GM10248 (cell line): ENCODE measurements at regions of chr7 and their contacts with region 1.

Region 1: GRCh38 chr7:117790251-117790650 is 83.0 kb downstream of the CTTNBP2 start:
- DNase-seq: no peak
- CTCF ChIP-seq: no peak

Region 2: DNA sequence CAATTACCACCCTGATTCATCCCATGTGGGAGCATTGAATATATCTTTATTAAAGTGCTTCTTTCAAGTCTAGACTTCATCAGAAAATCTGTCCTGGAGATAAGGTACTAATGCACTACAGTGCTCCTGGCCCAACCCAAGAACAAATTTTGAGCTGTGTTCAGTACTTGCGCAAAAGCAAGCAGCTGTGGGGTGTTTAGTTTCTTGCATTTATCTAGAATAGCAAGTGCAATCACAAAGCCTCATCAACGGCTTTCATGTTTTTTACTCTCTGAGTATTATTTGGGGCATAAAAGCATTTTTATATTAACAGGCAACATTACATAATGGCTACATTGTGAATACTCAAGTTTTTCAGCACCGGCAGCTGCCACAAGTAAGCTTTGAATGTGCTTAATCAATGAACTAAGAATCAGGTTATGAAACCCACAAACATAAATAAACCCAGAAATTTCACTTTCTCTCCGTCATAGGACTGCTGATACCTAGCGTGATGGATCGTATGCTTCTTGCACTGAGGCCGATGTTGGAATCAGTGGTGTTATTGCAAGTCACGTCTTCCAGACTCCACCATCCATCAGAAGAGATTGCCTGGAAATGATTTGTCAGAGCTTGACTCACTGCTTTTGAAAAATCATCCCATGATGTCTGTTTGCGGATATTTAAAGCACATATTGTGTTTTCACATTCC is 30.2 kb before region 1 on chr7:
- CTCF ChIA-PET with region 1: no interaction called
- POLR2A ChIA-PET with region 1: no interaction called
- DNase-seq: no peak
- CTCF ChIP-seq: no peak

Region 3: GRCh38 chr7:117777335-117778150 is 12.7 kb before region 1 on chr7:
- CTCF ChIA-PET with region 1: interaction called, 16 read pairs
- POLR2A ChIA-PET with region 1: no interaction called
- DNase-seq: no peak
- CTCF ChIP-seq: no peak